ENCODE measurements at regions of chr2 and their contacts with region 1.

Region 1: DNA sequence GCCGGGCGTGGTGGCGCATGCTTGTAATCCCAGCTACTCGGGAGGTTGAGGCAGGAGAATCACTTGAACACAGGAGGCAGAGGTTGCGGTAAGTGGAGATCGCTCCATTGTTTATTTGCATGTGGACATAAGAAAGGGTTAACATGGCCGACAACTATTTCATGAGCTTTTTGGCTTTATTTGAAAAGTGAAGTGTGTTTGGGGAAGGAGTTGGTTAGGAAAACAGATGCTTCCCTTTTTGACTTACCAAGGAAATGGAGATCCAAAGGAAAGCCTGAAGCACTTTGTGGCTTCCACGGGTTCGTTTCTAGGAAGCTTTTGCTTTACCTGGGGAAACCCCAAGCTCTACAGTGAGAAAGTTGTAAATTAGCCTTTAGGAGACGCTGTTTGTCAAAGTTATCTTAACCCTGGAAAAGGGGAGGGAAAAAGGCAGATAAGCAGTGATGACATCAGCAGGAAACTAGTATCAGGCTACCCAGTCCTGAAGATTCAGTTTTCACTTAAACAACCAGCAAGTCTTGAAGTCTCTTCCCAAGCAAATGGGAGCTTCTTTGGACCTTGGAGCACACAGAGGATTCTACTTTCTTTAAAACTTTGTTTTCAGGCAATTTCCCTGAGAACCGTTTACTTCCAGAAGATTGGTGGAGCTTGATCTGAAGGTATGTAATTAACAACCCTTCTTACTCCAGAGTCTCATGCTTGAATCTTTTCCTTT is at the start of gene CASP10:
- DNase-seq: peak; percentile 60
- ATAC-seq: peak; percentile 79
- H3K4me3 Mint-ChIP-seq: peak within 1 kb of the TSS; percentile 97
- H3K27ac Mint-ChIP-seq: peak within 1 kb of the TSS; percentile 93
- H3K4me1 Mint-ChIP-seq: peaks cover 46% of the 10 kb centered on the region
- H3K27me3 Mint-ChIP-seq: no peaks in the 10 kb centered on the region
- total RNA-seq, gene CASP10: 40.7 to 42.8 TPM

Region 2: GRCh38 chr2:200901459-200902072 is 281.2 kb before region 1 on chr2:
- CTCF ChIA-PET with region 1: interaction called, 37 read pairs
- POLR2A ChIA-PET with region 1: interaction called, 4 read pairs
- DNase-seq: peak; percentile 89
- ATAC-seq: peak; percentile 100
- H3K4me3 Mint-ChIP-seq: no peak overlapping the region
- H3K27ac Mint-ChIP-seq: peak overlapping the region; percentile 25
- H3K4me1 Mint-ChIP-seq: peaks cover 24% of the 10 kb centered on the region
- H3K27me3 Mint-ChIP-seq: no peaks in the 10 kb centered on the region

Region 3: DNA sequence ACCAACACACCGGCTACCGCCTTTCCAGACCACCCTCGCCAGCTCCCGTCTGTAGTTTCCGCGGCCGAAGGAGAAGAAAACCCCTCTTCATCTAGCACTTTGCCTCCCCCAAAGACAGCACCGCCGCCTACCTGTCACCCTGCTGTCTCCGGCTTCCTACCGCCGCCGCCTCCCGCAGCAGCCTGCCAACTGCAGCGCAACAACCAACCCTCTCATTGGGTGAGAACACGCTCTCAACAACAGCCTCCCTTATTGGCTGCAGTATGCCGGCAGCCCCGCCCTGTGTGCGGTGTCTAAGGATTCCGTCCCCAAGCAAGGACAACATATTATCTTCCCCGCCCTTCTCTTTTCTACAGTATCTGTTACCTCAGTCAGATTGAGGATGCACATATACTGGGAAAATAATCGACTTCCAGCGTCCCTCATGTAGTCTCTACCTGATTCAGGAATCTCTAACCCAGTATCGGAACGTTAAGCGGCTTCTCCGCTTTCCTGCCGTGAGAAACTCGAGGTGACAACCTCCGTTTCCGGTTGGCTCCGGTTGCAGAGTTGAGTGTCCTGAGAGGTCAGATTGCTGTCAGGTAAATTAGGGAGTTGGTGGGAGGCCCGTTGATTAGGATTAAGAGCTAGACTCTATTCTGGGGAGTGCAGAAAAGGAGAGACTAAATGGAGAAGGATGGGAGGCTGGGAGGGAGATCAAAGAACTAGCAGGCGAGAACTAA is 111.2 kb before region 1 on chr2 and contains the starts of genes HYCC2 and NDUFB3:
- CTCF ChIA-PET with region 1: interaction called, 23 read pairs
- POLR2A ChIA-PET with region 1: no interaction called
- DNase-seq: peak; percentile 96
- ATAC-seq: peak; percentile 97
- H3K4me3 Mint-ChIP-seq: peak within 1 kb of the TSS; percentile 89
- H3K27ac Mint-ChIP-seq: peak within 1 kb of the TSS; percentile 88
- H3K4me1 Mint-ChIP-seq: peaks cover 46% of the 10 kb centered on the region
- H3K27me3 Mint-ChIP-seq: no peaks in the 10 kb centered on the region
- total RNA-seq, gene HYCC2: 35.9 to 40.2 TPM
- total RNA-seq, gene NDUFB3: 167 to 173 TPM

Region 4: DNA sequence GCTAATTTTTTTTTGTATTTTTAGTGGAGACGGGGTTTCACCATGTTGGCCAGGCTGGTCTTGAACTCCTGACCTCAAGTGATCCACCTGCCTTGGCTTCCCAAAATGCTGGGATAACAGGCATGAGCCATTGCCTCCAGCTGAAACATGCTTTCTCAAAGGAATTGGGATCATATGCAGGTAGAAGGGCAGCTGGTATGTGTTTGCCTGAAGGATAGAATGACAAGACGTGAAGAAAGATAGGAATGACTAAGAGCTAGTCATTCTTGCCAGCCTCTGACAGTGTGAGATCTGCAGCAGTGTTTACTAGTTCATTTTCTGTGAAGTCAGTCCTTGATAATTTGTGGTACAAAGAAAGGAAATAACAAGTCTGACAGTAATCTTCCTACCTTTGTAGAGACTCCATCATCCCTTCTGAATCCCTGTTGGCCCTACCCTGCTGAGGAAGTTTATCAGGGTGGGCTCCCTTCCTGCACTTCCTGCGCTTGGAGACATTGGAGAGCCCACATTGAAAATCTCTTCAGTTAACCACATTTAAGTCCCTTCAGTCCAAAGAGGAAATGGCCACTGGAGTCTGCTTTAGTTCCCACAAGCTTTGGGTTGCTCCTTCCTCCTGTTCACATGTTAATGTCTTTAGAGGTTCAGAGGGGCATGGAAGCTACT is 52.2 kb before region 1 on chr2:
- CTCF ChIA-PET with region 1: interaction called, 11 read pairs
- POLR2A ChIA-PET with region 1: interaction called, 6 read pairs
- DNase-seq: peak; percentile 43
- ATAC-seq: peak; percentile 48
- H3K4me3 Mint-ChIP-seq: peak overlapping the region; percentile 62
- H3K27ac Mint-ChIP-seq: peak overlapping the region; percentile 85
- H3K4me1 Mint-ChIP-seq: peaks cover 72% of the 10 kb centered on the region
- H3K27me3 Mint-ChIP-seq: no peaks in the 10 kb centered on the region

Region 5: GRCh38 chr2:201194097-201194496 is 11.3 kb after region 1 on chr2:
- CTCF ChIA-PET with region 1: interaction called, 79 read pairs
- POLR2A ChIA-PET with region 1: interaction called, 12 read pairs
- DNase-seq: no peak
- ATAC-seq: peak; percentile 82
- H3K4me3 Mint-ChIP-seq: peak overlapping the region; percentile 63
- H3K27ac Mint-ChIP-seq: peak overlapping the region; percentile 84
- H3K4me1 Mint-ChIP-seq: peaks cover 75% of the 10 kb centered on the region
- H3K27me3 Mint-ChIP-seq: no peaks in the 10 kb centered on the region

Region 6: DNA sequence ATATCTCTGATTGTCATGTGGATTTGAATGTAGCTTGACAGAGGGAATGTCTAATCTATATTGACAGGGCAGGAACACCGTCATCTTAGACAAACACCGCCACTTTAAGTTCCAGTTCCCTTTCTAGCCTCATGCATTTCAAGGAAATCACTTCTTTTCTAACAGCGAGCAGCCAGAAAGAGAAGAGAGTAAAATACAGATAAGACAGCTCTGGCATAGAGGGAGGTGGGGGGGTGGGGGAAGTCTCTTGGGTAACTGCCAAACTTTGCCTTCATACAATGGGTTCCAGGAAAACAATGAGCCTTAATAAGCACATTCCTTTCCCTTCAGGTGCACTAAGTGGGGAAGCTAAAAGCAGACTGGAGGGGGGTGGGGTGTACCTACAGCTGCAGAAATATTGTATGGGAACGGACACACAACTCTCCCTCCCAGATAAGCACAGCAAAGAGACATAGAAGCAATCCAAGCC is 37.3 kb after region 1 on chr2:
- CTCF ChIA-PET with region 1: interaction called, 29 read pairs
- POLR2A ChIA-PET with region 1: interaction called, 4 read pairs
- DNase-seq: no peak
- ATAC-seq: no peak
- H3K4me3 Mint-ChIP-seq: no peak overlapping the region
- H3K27ac Mint-ChIP-seq: peak overlapping the region; percentile 39
- H3K4me1 Mint-ChIP-seq: peaks cover 39% of the 10 kb centered on the region
- H3K27me3 Mint-ChIP-seq: no peaks in the 10 kb centered on the region